ENCODE measurements at regions of chr7 and their contacts with region 1.

Region 1: GRCh38 chr7:30062591-30062990 is 34.4 kb downstream of the PLEKHA8 start:
- DNase-seq: no peak
- ATAC-seq: peak; percentile 67 to 85

Region 2: DNA sequence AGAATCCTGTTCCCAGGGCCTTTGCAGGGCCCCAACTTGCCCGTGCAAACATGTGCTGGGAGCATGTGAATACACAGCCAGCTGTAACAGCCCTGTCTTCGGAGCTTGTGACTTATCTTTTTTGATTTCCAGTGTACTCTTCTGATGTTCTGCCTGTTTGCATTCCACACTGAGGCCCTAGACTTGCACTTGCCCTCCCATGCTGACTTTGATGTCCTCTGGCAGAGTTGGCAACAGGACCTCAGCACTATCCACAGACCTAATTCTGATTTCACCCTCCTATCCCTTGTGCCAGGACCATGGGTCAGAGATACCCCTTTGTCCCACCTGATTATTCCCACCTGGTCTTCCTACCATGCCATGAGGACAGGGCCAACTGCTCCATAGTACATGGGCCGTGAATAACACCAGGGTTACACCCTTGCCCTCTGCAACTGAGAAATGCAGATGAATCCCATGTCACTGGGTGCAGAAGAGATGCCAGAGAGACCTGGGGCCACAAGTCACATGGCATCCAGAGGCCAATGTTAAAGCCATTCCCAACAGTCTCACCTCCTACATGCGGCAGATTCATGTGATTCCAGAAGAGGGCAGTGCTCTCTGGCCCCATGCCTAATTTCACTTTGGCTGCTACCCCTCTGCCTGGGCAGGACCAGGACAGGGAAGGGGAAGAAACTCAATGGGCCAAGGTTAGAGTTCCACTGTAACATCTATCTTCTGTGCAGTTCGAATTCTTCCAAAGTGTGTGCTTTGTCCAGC is 116.0 kb before region 1 on chr7:
- intact Hi-C with region 1: loop called in 1 of 2 experiments (anchors 5 kb)
- DNase-seq: peak; percentile 37
- ATAC-seq: peak; percentile 69 to 70